H1 (cell line): ENCODE measurements at regions of chr19 and their contacts with region 1.

Region 1: GRCh38 chr19:14073261-14073924 is 807 bp downstream of the MISP3 start:
- DNase-seq: peak in 1 of 2 experiments; percentile 86
- H3K4me3 ChIP-seq: peak overlapping the region; percentile 46 to 66 (median 50)
- H3K27ac ChIP-seq: no peak overlapping the region
- H3K4me1 ChIP-seq: peaks cover 0 to 15% (median 9%) of the 10 kb centered on the region in 4 experiments; a peak in 5 of 7 replicates
- H3K27me3 ChIP-seq: peaks cover 17 to 40% (median 32%) of the 10 kb centered on the region in 4 experiments
- CTCF ChIP-seq: peak; percentile 62 to 89 (median 83)
- EP300 ChIP-seq: no peak
- POLR2A ChIP-seq: no peak
- RAD21 ChIP-seq: peak in 1 of 2 experiments; percentile 19; a peak in 2 of 4 replicates

Region 2: GRCh38 chr19:13932911-13933393 is 140.4 kb before region 1 on chr19:
- CTCF ChIA-PET with region 1: interaction called, 17 read pairs
- POLR2A ChIA-PET with region 1: no interaction called
- DNase-seq: no peak
- H3K4me3 ChIP-seq: no peak overlapping the region
- H3K27ac ChIP-seq: no peak overlapping the region
- H3K4me1 ChIP-seq: peaks cover 3 to 35% (median 15%) of the 10 kb centered on the region in 4 experiments
- H3K27me3 ChIP-seq: peaks cover 0 to 2% (median 0%) of the 10 kb centered on the region in 4 experiments; a peak in 1 of 7 replicates
- CTCF ChIP-seq: no peak
- EP300 ChIP-seq: no peak
- POLR2A ChIP-seq: no peak
- RAD21 ChIP-seq: no peak

Region 3: GRCh38 chr19:14039181-14039580 is 34.2 kb before region 1 on chr19:
- CTCF ChIA-PET with region 1: interaction called, 19 read pairs
- POLR2A ChIA-PET with region 1: interaction called, 6 read pairs
- DNase-seq: no peak
- H3K4me3 ChIP-seq: no peak overlapping the region
- H3K27ac ChIP-seq: no peak overlapping the region
- H3K4me1 ChIP-seq: no peaks in the 10 kb centered on the region
- H3K27me3 ChIP-seq: no peaks in the 10 kb centered on the region
- CTCF ChIP-seq: no peak
- EP300 ChIP-seq: no peak
- POLR2A ChIP-seq: no peak
- RAD21 ChIP-seq: no peak